ENCODE measurements at regions of chr9 and their contacts with region 1.

Region 1: DNA sequence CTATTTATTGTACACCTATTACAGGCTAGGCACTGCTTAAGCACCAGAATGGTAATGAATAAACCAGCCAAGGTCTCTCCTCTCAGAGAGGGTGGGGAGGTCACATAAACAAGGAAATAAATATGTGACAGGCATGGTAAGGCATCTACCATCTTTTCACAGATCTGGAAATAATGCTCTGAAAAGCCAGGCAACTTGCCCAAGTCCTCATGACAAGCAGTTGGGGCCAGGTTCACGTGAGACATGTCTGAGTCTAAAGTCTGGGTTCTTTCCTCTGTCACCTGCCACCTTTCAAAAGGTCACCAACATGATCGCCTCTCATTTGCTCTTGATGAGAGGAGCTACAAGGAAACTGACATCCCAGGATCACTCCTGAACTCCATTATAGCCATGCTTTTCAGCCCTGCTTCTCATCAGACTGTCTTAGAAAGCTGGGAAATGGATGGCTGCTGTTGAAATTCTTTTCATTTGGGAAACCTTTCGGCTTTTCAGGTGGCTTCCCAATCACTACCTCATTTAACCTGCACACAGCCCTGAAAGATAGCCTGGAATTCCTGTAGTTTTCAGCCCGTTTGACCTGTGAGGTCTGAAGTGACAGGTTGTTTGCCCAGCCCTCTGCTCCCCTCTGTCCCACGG is 123.1 kb downstream of the CRB2 start:
- DNase-seq: no peak
- H3K4me3 ChIP-seq: no peak overlapping the region
- H3K27ac ChIP-seq: no peak overlapping the region
- H3K4me1 ChIP-seq: no peaks in the 10 kb centered on the region
- H3K27me3 ChIP-seq: no peaks in the 10 kb centered on the region
- CTCF ChIP-seq: no peak

Region 2: DNA sequence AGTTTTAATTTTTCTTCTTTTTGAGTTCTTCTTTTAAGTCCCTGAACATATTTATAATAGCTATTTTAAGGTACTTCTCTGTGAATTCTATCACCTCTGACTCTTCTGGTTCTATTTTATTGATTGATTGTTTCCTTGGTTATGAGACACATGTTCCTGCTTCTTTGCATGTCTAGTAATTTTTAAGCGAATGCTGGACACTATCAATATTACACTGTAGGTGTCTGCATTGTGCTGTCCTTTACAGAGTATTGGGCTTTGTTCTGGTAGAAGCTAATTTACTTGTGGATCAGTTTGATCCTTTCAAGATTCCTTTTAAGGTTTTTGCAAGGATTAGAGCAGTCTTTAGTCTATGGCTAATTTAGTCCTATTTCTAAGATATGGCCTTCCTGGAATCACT is 1978.3 kb after region 1 on chr9:
- CTCF ChIA-PET with region 1: interaction called, 12 read pairs
- POLR2A ChIA-PET with region 1: no interaction called
- intact Hi-C with region 1: no loop called
- DNase-seq: no peak
- H3K4me3 ChIP-seq: no peak overlapping the region
- H3K27ac ChIP-seq: no peak overlapping the region
- H3K4me1 ChIP-seq: 0 out of 2 replicates have a peak, but pooled peaks cover 6% of the 10 kb centered on the region
- H3K27me3 ChIP-seq: no peaks in the 10 kb centered on the region
- CTCF ChIP-seq: no peak

Measured in PC-9 (cell line).